CD4-positive, alpha-beta T cell (primary cell): ENCODE measurements at regions of chr12 and their contacts with region 1.

Region 1: DNA sequence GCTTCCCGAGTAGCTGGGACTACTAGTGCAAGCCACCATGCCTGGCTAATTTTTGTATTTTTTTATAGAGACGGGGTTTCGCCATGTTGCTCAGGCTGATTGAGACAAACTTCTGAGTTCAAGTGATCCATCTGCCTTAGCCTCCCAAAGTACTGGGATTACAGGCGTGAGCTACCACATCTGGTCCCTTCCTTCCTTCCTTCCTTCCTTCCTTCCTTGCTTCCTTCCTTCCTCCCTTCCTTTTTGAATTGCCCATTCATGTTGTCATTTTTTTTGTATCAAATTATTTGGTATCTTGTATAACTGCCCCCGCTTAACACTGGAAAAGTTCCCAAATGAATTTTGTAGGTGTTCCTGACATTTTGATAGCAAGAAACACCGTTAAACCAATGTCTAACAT is 11.7 kb downstream of the RAD9B start:
- DNase-seq: no peak
- ATAC-seq: no peak
- H3K4me3 ChIP-seq: no peak overlapping the region
- H3K4me3 Mint-ChIP-seq: no peak overlapping the region
- H3K27ac ChIP-seq: no peak overlapping the region
- H3K27ac Mint-ChIP-seq: no peak overlapping the region
- H3K4me1 ChIP-seq: no peaks in the 10 kb centered on the region
- H3K4me1 Mint-ChIP-seq: no peaks in the 10 kb centered on the region
- H3K27me3 ChIP-seq: no peaks in the 10 kb centered on the region
- H3K27me3 Mint-ChIP-seq: no peaks in the 10 kb centered on the region
- CTCF ChIP-seq: no peak

Region 2: GRCh38 chr12:110548678-110549077 is 34.8 kb after region 1 on chr12:
- CTCF ChIA-PET with region 1: interaction called, 3 read pairs
- POLR2A ChIA-PET with region 1: no interaction called
- intact Hi-C with region 1: loop called in 1 of 2 experiments (anchors 5 kb)
- DNase-seq: no peak
- ATAC-seq: no peak
- H3K4me3 ChIP-seq: no peak overlapping the region
- H3K4me3 Mint-ChIP-seq: no peak overlapping the region
- H3K27ac ChIP-seq: no peak overlapping the region
- H3K27ac Mint-ChIP-seq: no peak overlapping the region
- H3K4me1 ChIP-seq: peaks cover 7% of the 10 kb centered on the region
- H3K4me1 Mint-ChIP-seq: peaks cover 39% of the 10 kb centered on the region
- H3K27me3 ChIP-seq: no peaks in the 10 kb centered on the region
- H3K27me3 Mint-ChIP-seq: no peaks in the 10 kb centered on the region
- CTCF ChIP-seq: no peak